ENCODE measurements at regions of chr12 and their contacts with region 1.

Region 1: GRCh38 chr12:64610149-64610678 is at the start of gene RASSF3:
- DNase-seq: peak; percentile 92
- total RNA-seq, gene RASSF3: 246 to 312 TPM

Region 2: GRCh38 chr12:64551698-64552097 is 58.5 kb before region 1 on chr12:
- intact Hi-C with region 1: loop called in 1 of 2 experiments (anchors 10 kb)
- DNase-seq: no peak

Region 3: DNA sequence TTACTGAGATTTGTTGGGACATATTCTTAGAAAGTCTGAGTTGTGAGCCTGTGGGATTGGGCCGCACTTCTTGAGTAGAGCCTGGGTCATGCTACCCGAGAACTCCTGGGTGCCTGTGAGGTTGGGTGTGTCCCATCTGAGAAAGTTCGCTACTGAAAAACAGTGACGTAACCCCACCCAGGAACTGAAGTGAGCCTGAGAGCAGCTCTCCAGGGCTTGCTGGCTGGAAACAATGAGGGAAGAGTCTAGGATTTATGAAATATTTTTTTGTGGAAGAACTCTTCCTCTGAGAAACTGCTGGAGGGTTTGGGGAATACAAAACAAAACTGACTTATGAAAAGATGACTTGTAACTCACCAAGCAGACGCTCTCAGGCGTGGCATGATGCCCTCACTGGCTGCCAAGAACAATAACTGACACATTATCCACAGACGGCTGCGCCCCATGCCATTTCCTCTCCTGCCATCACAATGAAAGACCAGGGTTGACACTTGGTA is 69.3 kb after region 1 on chr12:
- intact Hi-C with region 1: loop called (anchors 5 to 10 kb)
- DNase-seq: peak; percentile 92

Region 4: DNA sequence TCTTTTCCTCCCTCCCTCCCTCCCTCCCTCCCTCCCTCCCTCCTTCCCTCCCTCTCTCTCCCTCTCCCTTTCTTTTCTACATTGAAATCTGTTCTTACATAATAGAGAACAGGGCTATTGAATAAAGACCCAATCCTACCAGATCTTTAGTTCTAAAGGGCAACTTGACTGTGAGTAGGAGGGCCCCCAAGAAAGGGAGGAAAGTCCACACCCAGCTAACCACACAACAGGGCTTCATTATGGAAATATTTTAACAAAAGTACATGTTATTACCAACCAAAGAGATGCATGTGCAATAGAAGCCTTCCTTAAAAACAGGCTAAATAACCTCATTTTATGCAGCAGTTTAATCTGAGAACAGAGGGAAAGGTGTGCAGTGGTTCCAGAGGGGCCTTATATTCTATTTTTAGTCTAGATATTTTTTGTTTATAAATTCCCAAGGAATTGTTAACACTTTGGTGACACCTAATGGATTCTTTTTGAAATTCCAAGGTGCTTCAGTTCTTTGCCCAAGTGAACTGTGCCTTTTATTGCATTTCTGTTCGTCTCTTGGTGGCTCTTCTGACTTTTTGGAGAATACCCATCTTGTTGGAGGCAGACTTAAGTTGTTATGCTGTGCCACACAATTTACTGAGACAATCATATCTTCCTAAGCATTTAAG is 86.0 kb after region 1 on chr12:
- intact Hi-C with region 1: loop called in 1 of 2 experiments (anchors 5 kb)
- DNase-seq: no peak

Region 5: GRCh38 chr12:64706306-64706705 is 96.1 kb after region 1 on chr12:
- intact Hi-C with region 1: no loop called
- DNase-seq: no peak

Region 6: DNA sequence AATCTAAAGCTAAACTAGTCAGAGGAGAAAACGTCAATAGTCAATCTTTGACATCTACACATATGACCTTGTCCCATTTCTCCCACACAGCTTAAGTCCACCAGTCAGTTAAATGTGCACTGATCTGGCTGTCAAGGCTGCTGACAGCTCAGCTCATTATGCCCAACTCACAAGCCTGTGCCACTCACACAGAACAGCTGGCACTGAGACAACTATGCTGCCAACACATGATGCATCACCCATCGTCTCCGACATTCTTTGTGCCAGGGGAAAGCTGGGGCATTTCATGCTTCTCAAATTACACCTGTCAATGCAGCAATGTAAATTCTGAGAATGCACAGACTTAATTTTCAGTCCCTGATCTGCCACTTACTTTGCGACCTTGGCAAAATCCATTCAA is 123.6 kb after region 1 on chr12:
- intact Hi-C with region 1: no loop called
- DNase-seq: no peak

Measured in posterior vena cava (tissue), 2 donors.